Testis (tissue), 5 donors: ENCODE measurements at regions of chr6 and their contacts with region 1.

Region 1: DNA sequence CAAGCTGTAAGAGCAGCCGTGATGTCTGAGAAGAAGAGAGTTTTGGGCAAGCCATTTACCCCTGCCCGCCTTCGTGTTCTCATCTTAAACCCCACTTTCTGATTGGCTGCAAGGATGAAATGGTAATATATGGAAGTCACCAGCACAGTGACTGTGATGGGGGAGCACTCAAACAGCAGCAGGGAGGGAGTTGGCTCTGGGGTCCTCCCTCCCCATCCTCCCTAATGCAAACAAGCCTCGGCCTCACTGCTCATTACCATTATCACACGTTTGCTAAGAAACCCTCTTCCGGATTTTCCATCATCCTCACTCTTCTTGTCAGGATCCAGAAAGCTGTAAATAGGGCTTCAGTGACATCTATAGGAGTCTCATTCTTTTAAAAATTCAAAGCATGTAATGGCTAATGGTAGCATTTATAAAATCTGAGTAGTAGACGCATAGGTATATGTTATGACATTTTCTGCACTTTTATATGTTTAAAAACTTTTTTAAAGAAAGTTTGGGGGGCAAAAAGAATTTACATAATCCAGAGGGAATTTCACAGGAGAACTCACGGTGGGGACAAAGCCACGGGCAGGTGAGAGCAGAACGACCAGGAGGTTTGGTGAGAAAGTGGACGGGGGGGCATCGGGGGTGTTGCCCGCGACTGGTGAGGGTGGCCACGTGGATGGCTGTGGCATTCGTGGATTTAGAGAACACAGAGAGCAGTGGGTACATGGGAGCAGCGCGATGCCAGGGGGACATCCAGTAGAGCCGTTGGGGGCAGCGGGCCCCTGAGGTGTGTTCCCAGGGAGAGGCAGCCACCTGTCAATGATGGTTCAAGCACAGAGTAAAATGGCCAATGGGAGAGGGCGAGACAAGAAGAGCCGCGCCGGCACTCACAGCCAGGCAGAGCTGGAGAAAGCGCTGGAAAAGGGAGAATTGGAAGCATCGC is 29.6 kb downstream of the SUMO4 start:
- DNase-seq: no peak
- H3K4me3 ChIP-seq: no peak overlapping the region
- H3K27ac ChIP-seq: no peak overlapping the region
- H3K4me1 ChIP-seq: no peaks in the 10 kb centered on the region
- H3K27me3 ChIP-seq: no peaks in the 10 kb centered on the region
- CTCF ChIP-seq: no peak
- POLR2A ChIP-seq: no peak

Region 2: GRCh38 chr6:149082286-149082707 is 347.4 kb before region 1 on chr6:
- intact Hi-C with region 1: loop called (anchors 10 kb)
- DNase-seq: peak; percentile 94
- H3K4me3 ChIP-seq: no peak overlapping the region
- H3K27ac ChIP-seq: no peak overlapping the region
- H3K4me1 ChIP-seq: peaks cover 14% of the 10 kb centered on the region
- H3K27me3 ChIP-seq: no peaks in the 10 kb centered on the region
- CTCF ChIP-seq: peak; percentile 52 to 74 (median 62)
- POLR2A ChIP-seq: no peak

Region 3: DNA sequence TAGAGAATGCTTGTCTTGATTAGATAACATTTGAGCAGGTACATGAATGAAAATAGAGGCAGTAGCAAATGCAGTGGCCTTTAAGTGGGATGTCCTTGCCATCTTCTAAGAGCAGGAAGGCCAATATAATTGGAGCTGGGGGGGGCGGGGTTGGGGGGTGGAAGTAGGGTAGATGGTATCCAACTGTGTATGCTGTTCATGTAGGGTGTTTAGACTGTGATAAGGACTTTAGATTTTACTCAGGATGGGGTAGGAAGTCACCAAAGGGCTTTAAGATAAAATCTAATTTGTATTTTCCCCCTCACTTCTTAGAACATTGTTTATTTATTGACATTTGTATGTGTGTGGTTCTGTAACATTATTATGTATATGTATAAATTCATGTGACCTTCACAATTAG is 100.2 kb before region 1 on chr6:
- intact Hi-C with region 1: loop called (anchors 5 kb)
- DNase-seq: no peak
- H3K4me3 ChIP-seq: no peak overlapping the region
- H3K27ac ChIP-seq: no peak overlapping the region
- H3K4me1 ChIP-seq: peaks cover 22% of the 10 kb centered on the region
- H3K27me3 ChIP-seq: no peaks in the 10 kb centered on the region
- CTCF ChIP-seq: no peak
- POLR2A ChIP-seq: no peak